Sigmoid colon (tissue), 7 donors: ENCODE measurements at regions of chr7 and their contacts with region 1.

Region 1: DNA sequence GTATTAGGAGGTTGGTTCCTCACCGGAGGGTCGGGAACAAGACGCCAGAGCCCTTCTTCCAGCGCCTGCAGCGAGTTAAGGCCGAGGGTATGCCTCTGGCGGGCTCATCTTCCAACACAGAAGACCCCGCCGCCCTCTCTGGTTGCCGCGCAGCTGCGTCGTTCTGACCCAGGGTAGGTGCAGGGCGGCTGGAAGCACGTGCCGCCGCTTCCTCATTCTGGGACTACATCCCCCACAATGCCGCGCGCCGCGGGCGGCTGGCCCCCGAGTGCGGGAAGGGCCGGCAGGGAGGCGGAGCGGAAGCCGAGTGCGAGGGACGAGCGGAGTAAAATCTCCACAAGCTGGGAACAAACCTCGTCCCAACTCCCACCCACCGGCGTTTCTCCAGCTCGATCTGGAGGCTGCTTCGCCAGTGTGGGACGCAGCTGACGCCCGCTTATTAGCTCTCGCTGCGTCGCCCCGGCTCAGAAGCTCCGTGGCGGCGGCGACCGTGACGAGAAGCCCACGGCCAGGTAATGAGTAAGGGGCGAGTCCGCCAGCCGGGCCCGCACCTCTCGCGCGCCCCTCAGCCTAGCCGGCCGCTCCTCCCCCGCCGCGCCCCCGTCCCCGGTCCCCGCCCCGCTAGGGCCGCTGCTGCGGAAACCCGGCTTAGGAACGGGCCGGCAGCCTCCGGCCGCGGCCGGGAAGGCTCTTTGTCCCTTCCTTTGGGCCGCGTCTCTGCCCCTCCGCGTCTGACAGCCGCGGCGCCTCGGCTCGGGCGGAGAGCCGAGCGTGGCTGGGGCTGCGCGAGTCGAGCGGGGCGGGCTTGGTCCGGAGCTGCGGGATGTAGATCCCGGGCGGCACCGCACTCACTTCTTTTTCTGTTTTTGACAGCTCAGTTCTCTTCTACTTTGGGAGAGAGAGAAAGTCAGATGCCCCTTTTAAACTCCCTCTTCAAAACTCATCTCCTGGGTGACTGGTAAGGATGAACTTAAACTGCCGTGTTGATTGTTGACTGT is at the start of gene CCDC126:
- DNase-seq: peak; percentile 95
- H3K4me3 ChIP-seq: peak within 1 kb of the TSS; percentile 62 to 94 (median 76)
- H3K27ac ChIP-seq: peak within 1 kb of the TSS; percentile 94 to 99 (median 99)
- H3K4me1 ChIP-seq: peaks cover 0 to 24% (median 9%) of the 10 kb centered on the region in 4 donors
- H3K27me3 ChIP-seq: no peaks in the 10 kb centered on the region
- CTCF ChIP-seq: no peak
- EP300 ChIP-seq: no peak
- POLR2A ChIP-seq: peak in 1 of 2 donors; percentile 14
- total RNA-seq, gene CCDC126: 11.1 to 25.0 (median 14.7) TPM

Region 2: DNA sequence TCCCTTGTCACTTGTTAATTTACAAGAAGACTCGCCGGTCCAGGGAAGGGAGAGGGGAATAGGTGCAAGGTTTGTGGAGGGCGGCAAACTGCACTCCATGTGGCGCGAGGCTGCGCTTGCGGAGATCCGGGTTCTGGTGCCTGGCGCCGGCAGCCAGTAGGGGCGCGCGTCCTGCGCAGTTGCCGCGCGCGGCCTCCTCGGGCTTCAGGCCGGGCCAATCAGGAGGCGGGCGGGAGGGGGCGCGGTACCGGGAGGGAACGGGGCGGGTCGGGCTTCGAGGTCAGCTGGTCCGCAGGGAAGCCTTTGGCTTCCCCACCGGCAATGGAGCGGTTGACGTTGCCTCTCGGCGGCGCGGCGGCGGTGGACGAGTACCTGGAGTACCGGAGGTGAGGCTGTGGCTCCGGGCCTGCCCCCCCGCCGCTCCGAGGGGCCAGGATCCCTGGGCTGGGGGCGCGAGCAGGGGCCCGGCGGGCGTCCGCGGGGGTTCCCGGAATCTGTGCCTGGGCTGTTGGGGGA is 82.6 kb after region 1 on chr7 and contains the start of gene FAM221A:
- intact Hi-C with region 1: loop called (anchors 1 kb)
- DNase-seq: peak; percentile 95
- H3K4me3 ChIP-seq: peak within 1 kb of the TSS; percentile 62 to 83 (median 66)
- H3K27ac ChIP-seq: peak within 1 kb of the TSS; percentile 83 to 86 (median 84)
- H3K4me1 ChIP-seq: peaks cover 0 to 15% (median 8%) of the 10 kb centered on the region in 4 donors
- H3K27me3 ChIP-seq: no peaks in the 10 kb centered on the region
- CTCF ChIP-seq: peak; percentile 57 to 89 (median 63)
- EP300 ChIP-seq: no peak
- POLR2A ChIP-seq: no peak
- total RNA-seq, gene FAM221A: 9.4 to 16.3 (median 11.3) TPM